ENCODE measurements at regions of chr6 and their contacts with region 1.

Region 1: DNA sequence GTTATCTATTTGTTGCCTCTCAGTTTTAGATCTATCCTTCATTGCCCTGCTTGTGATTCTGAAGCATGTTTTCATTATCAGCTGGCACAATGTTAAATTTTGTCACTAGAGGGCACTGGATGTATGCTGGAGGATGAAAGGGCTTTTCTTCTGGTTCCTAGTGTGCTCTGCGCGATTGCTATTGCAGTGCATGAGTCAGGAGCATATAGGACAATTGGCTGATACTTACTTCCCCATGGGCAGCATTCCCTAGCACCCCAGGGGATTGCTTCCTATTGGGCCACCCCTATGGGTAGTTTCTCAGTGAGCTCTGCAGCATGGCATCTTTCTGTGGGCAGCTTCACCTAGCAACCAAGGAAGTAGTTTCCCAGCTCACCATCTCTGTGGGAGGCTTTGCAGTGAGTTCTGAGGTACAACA is 280.3 kb upstream of the SYNCRIP start:
- DNase-seq: peak in 4 of 5 donors; percentile 2 to 9 (median 4)
- H3K4me3 ChIP-seq: no peak overlapping the region
- H3K4me3 Mint-ChIP-seq: no peak overlapping the region
- H3K27ac ChIP-seq: no peak overlapping the region
- H3K27ac Mint-ChIP-seq: no peak overlapping the region
- H3K4me1 ChIP-seq: no peaks in the 10 kb centered on the region
- H3K4me1 Mint-ChIP-seq: no peaks in the 10 kb centered on the region
- H3K27me3 ChIP-seq: no peaks in the 10 kb centered on the region
- H3K27me3 Mint-ChIP-seq: no peaks in the 10 kb centered on the region

Region 2: GRCh38 chr6:85911067-85911466 is 12.0 kb before region 1 on chr6:
- CTCF ChIA-PET with region 1: interaction called, 13 read pairs
- POLR2A ChIA-PET with region 1: no interaction called
- intact Hi-C with region 1: no loop called
- DNase-seq: no peak
- H3K4me3 ChIP-seq: no peak overlapping the region
- H3K4me3 Mint-ChIP-seq: no peak overlapping the region
- H3K27ac ChIP-seq: no peak overlapping the region
- H3K27ac Mint-ChIP-seq: no peak overlapping the region
- H3K4me1 ChIP-seq: no peaks in the 10 kb centered on the region
- H3K4me1 Mint-ChIP-seq: no peaks in the 10 kb centered on the region
- H3K27me3 ChIP-seq: no peaks in the 10 kb centered on the region
- H3K27me3 Mint-ChIP-seq: peaks cover 3 to 9% of the 10 kb centered on the region in 2 donors

Region 3: DNA sequence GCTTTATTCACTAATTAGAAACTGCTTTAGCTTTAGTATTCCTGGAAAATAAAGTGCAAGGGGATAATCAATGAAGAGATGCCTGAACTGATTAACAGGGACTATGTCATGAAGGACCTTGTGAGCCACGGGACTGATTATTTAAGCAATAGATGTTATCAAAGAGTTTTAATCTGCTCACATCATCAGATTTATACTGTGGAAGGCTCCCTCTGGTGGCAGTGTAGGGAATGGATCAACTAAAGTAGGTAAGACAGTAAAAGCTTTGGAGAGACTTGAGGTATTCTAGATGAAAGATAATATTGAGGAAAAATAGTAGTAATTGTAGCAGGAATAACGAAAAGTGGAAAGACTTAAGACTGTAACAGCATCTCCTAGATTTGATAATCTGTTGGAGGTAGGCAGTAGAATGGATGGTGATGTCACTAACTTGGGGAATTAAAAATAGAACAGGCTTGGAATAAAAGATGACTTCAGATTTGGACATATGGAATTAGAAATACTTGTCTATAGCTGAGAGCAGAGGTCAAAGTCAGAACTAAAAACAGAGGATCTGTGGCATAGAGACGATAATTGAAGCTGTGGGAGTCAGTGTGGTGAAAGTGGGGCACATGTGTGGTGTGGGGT is 934.0 kb after region 1 on chr6:
- CTCF ChIA-PET with region 1: no interaction called
- POLR2A ChIA-PET with region 1: no interaction called
- intact Hi-C with region 1: loop called (anchors 2 kb)
- DNase-seq: no peak
- H3K4me3 ChIP-seq: no peak overlapping the region
- H3K4me3 Mint-ChIP-seq: no peak overlapping the region
- H3K27ac ChIP-seq: no peak overlapping the region
- H3K27ac Mint-ChIP-seq: no peak overlapping the region
- H3K4me1 ChIP-seq: no peaks in the 10 kb centered on the region
- H3K4me1 Mint-ChIP-seq: no peaks in the 10 kb centered on the region
- H3K27me3 ChIP-seq: no peaks in the 10 kb centered on the region
- H3K27me3 Mint-ChIP-seq: no peaks in the 10 kb centered on the region

Measured in CD4-positive, alpha-beta memory T cell (primary cell).